ENCODE measurements at regions of chrX and their contacts with region 1.

Region 1: GRCh38 chrX:18425199-18426003 is at the start of gene CDKL5:
- DNase-seq: peak; percentile 95 to 97
- ATAC-seq: peak; percentile 97 to 99 (median 98)
- H3K4me3 ChIP-seq: peak within 1 kb of the TSS; percentile 65 to 92 (median 80)
- H3K27ac ChIP-seq: peak within 1 kb of the TSS; percentile 64 to 87 (median 80)
- H3K4me1 ChIP-seq: peaks cover 0 to 20% (median 0%) of the 10 kb centered on the region in 9 donors
- H3K27me3 ChIP-seq: peaks cover 0 to 61% (median 0%) of the 10 kb centered on the region in 7 donors
- CTCF ChIP-seq: peak in 1 of 9 donors; percentile 18
- total RNA-seq, gene CDKL5: 9.2 to 12.6 (median 10.0) TPM

Region 2: DNA sequence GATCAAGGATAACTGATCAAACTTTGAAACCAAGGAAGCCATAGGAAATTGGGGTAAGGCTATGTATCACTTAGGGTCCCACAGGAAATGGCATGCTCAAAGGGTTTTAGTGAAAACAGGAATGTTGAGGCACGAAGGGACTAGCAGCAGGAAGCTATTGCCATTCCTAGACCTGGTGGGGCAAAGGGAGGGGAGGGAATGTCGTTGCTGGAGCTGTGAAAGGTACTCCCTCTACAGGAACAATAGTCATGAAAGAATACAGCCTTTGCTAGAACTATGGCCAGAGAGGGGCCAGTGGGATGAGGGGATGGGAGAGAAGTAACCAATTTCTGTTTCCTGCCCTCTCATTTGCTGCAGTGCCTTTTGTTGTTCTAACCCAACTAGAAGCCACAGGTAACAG is 1467.0 kb before region 1 on chrX:
- intact Hi-C with region 1: loop called in 1 of 10 experiments (anchors 5 kb)
- DNase-seq: no peak
- ATAC-seq: no peak
- H3K4me3 ChIP-seq: no peak overlapping the region
- H3K27ac ChIP-seq: no peak overlapping the region
- H3K4me1 ChIP-seq: peaks cover 0 to 10% (median 4%) of the 10 kb centered on the region in 9 donors
- H3K27me3 ChIP-seq: peaks cover 0 to 50% (median 0%) of the 10 kb centered on the region in 7 donors
- CTCF ChIP-seq: no peak

Region 3: GRCh38 chrX:18309401-18309800 is 116.0 kb before region 1 on chrX:
- intact Hi-C with region 1: no loop called
- DNase-seq: no peak
- ATAC-seq: no peak
- H3K4me3 ChIP-seq: no peak overlapping the region
- H3K27ac ChIP-seq: no peak overlapping the region
- H3K4me1 ChIP-seq: no peaks in the 10 kb centered on the region
- H3K27me3 ChIP-seq: no peaks in the 10 kb centered on the region
- CTCF ChIP-seq: no peak

Region 4: DNA sequence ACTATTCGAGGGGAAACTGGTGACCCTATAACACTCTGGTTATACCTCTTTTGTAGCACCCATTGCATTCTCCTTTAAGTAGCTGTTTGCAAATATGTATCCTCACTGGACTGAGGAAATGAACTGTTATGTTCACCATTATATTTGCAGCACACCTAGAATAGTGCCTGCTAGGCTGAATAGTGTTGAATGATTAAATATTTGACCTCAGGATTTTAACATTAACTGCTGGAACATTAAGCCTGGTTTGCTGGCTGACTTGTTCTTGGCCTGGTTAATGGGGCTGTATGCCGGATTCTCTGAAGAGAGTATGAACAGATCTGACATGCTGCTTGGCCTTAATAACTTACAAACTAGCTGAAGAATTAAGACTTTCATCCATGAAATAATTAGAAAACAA is 166.4 kb after region 1 on chrX:
- intact Hi-C with region 1: no loop called
- DNase-seq: no peak
- ATAC-seq: no peak
- H3K4me3 ChIP-seq: no peak overlapping the region
- H3K27ac ChIP-seq: no peak overlapping the region
- H3K4me1 ChIP-seq: no peaks in the 10 kb centered on the region
- H3K27me3 ChIP-seq: no peaks in the 10 kb centered on the region
- CTCF ChIP-seq: no peak

Region 5: DNA sequence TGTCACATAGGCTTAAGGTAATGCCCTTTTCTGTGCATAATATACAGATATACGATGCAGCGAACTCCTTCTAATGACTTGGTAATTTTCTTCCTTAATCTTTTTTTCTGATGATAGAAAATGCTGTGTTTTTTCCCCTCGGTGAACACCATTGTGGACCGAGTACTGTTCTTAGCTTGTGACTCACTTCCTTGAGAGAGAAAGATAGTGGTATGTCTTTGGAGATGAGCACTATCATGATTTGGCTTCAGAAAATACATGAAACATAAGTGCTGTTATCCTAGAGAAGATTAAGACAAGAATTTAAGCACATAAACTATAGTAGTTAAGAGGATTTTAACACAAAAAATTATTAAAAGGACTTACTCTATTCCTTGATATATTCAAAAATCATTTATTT is 182.6 kb after region 1 on chrX:
- intact Hi-C with region 1: loop called in 1 of 10 experiments (anchors 10 kb)
- DNase-seq: no peak
- ATAC-seq: no peak
- H3K4me3 ChIP-seq: no peak overlapping the region
- H3K27ac ChIP-seq: no peak overlapping the region
- H3K4me1 ChIP-seq: no peaks in the 10 kb centered on the region
- H3K27me3 ChIP-seq: peaks cover 0 to 8% (median 0%) of the 10 kb centered on the region in 7 donors
- CTCF ChIP-seq: no peak

Region 6: DNA sequence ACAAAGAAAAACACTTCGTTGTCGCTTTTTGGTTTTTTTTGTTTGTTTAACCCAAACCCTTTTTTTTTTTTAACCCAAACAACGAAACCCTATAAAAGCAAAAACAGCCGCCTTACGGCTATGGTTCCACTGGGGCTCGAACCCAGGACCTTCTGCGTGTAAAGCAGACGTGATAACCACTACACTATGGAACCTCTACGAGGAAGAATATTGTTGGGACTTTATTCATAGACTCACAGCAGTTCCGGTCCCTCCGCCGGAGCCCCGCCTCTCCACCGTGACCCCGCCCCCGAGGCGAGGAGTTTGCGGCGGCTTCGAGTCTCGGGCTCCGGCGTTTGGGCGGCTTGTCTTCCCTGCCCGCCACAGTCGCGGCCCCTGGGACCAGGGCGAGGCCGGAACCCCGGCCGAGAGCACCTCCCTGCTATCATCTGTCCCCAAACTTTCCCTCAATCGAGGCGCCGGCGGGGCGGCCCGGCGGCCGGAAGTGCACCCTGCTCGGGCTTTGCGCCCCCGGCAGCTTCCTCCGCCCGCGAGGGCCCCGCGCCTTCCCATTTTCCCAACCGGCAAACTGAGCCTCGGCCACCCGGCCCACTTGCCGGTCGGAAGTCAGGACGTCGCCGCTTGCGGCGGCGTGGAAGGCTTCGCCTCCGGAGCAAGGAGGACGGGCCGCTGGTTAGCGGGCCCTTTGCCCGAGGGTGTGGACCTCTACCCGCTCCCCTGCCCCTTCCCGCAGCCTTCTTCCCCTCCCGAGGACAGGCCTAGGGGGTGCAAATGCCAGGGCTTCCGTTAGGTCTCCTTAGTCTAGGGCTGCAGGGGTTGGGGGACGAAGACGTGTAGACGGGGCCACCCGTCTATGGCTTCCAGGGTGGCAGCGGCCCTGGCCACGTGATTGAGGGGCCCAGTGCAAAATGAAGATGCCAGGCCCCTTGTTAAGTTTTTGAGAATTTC is 249.7 kb after region 1 on chrX:
- intact Hi-C with region 1: loop called in 3 of 10 experiments (anchors 2 to 10 kb)
- DNase-seq: peak; percentile 75 to 77
- ATAC-seq: peak; percentile 92 to 98 (median 96)
- H3K4me3 ChIP-seq: peak overlapping the region; percentile 43 to 81 (median 72)
- H3K27ac ChIP-seq: peak overlapping the region; percentile 64 to 95 (median 84)
- H3K4me1 ChIP-seq: peaks cover 0 to 7% (median 0%) of the 10 kb centered on the region in 9 donors
- H3K27me3 ChIP-seq: peaks cover 0 to 11% (median 0%) of the 10 kb centered on the region in 7 donors
- CTCF ChIP-seq: no peak

Region 7: DNA sequence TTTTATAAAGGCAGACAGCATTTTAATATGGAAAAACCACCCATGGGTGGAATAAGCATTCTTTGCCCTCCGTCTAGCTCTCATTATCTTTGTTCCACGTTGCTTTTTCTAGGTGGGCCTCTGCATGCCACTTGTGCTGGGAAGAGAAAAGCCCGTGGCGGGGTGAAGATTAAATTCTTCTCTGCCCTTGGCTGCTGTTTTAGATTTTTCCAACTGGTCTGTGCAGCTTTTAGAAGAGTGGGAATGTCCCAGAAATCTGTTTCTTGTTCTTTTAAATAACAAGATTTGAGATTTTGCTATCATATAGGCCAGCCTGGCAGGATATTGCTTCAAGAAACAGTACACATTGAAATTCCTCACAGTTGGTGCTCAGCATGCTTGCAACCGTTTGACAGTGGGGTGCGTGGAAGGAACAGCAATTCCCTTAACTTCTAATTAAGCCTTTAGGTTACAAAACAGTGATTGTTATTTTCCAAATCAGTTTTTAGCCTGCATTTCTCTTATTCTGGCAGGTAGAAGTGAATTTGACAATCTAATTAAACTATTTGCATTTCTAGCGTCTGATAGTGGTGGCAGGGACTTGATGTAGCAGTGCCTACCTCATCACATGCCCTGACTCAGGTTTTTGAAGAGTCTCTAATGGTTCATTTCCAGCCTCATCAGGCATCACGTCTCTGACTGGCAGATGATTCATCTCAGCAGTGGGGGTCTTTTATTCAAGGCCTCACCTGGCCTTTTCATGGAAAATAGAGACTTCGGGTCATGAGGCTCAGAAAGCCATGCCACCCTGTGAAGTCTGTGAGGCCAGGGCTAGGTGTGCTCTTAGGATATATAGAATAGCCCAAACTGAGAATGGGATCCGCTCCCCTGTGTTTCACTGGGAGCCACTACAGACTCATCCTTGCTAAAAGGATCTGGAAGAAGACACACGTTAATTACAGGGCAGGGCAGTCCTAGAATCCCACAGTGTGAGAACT is 332.8 kb after region 1 on chrX:
- intact Hi-C with region 1: no loop called
- DNase-seq: no peak
- ATAC-seq: no peak
- H3K4me3 ChIP-seq: no peak overlapping the region
- H3K27ac ChIP-seq: no peak overlapping the region
- H3K4me1 ChIP-seq: peaks cover 0 to 5% (median 0%) of the 10 kb centered on the region in 9 donors
- H3K27me3 ChIP-seq: no peaks in the 10 kb centered on the region
- CTCF ChIP-seq: no peak